ENCODE measurements at regions of chr18 and their contacts with region 1.

Region 1: DNA sequence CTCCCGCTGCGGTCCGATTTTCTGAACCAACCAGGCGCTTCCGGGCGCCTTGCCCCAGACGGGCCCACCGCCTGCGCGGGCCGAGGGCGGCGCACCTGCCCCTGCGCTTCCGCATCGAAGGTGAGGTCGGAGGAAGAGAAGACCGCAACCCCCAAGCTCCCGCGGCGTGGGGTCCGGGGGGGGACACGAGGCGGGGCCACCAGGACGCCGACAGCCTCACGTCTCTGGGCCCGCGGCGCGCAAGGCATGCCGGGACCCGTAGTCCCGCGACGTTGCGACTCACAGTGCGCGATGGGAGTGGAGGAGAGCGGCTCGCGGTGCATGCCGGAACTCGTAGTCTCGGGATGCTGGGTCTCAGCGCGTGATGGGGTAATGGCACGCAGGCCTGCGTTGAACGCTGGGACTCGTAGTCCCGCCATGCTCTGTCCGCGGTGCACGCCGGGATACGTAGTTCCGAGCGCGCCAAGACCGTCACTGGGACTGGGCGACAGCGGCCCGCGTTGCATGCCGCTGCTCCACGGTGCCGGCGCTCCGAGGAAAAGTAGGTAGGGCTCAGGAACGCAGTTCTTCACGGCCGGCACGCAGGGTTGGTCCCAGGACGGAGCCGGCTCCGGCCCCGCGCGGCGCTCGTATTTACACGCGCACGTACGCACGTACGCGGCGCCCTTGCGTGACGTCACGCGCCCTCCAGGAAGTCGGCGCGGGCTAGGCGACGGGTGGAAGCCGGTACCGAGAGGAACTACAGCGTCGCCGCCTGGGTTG is at the start of gene CTDP1:
- DNase-seq: peak; percentile 94 to 99 (median 99)
- ATAC-seq: peak; percentile 91
- H3K4me3 ChIP-seq: peak within 1 kb of the TSS; percentile 94
- H3K4me3 Mint-ChIP-seq: peak within 1 kb of the TSS; percentile 85 to 99 (median 98)
- H3K27ac ChIP-seq: peak within 1 kb of the TSS; percentile 96
- H3K27ac Mint-ChIP-seq: peak within 1 kb of the TSS; percentile 92 to 100 (median 99)
- H3K4me1 ChIP-seq: peaks cover 34 to 55% of the 10 kb centered on the region in 2 donors
- H3K4me1 Mint-ChIP-seq: peaks cover 33 to 68% (median 63%) of the 10 kb centered on the region in 7 donors
- H3K27me3 ChIP-seq: no peaks in the 10 kb centered on the region
- H3K27me3 Mint-ChIP-seq: peaks cover 0 to 3% (median 0%) of the 10 kb centered on the region in 5 donors
- total RNA-seq, gene CTDP1: 38.8 to 75.3 (median 41.2) TPM

Region 2: DNA sequence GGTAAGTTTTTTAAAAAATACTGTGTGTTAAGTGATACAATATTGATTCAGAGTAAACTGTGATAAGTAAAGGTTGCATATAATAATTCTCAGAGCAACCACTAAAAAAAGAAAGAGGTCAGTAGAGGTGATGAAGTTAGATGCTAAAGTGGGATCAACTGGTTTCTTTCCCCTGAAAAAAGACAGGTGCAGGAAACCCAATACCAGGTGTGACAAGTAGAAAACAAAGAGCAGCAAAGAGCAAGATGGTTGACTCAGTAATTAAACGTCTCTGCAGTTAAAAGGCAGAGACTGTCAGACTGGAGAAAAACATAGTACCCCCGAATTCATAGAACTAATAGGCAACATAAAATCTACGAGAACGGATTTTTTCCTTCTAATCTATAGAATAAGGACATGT is 481.8 kb before region 1 on chr18:
- CTCF ChIA-PET with region 1: no interaction called
- POLR2A ChIA-PET with region 1: no interaction called
- intact Hi-C with region 1: no loop called
- DNase-seq: no peak
- ATAC-seq: no peak
- H3K4me3 ChIP-seq: no peak overlapping the region
- H3K4me3 Mint-ChIP-seq: no peak overlapping the region
- H3K27ac ChIP-seq: no peak overlapping the region
- H3K27ac Mint-ChIP-seq: no peak overlapping the region
- H3K4me1 ChIP-seq: no peaks in the 10 kb centered on the region
- H3K4me1 Mint-ChIP-seq: peaks cover 3 to 16% (median 6%) of the 10 kb centered on the region in 7 donors
- H3K27me3 ChIP-seq: no peaks in the 10 kb centered on the region
- H3K27me3 Mint-ChIP-seq: no peaks in the 10 kb centered on the region

Region 3: DNA sequence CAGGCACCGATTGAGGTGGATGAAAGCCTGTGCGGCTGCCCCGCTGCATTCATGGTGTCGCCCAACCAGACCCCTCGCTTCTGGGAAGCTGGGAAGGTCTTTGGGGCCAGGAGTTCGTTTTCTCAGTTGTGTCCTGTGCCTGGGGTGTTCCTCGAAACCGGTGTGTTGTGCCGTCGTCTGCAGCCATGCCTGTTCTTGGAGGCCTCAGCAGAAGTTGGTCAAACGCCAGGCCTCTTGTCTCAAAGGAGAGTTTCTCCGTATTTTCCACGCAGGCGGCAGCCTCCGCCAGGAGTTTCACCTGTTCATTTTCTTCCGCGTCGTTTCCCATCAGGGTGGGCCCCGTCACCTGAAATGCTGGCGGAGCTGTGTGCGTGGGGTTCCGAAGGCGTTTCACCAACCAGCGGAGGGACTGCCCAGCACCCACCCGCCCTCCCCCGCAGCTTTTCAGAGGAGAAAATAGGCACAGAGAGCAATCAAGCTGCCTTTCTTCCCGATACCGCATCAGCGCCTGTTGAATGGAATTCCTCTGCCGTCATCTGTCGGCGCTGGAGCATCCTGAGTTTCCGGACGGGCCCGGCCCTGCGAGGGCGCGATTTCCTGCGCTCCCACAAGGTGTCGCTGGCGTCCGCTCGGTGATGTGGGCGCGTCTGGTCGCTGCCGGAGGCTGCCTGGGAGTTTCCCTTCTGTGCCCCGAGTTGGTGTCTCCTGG is 300.6 kb before region 1 on chr18:
- CTCF ChIA-PET with region 1: no interaction called
- POLR2A ChIA-PET with region 1: no interaction called
- intact Hi-C with region 1: no loop called
- DNase-seq: peak; percentile 67 to 87 (median 78)
- ATAC-seq: peak; percentile 95
- H3K4me3 ChIP-seq: no peak overlapping the region
- H3K4me3 Mint-ChIP-seq: peak overlapping the region in 2 of 10 donors; percentile 11 to 50
- H3K27ac ChIP-seq: no peak overlapping the region
- H3K27ac Mint-ChIP-seq: peak overlapping the region in 7 of 9 donors; percentile 18 to 77 (median 63)
- H3K4me1 ChIP-seq: peaks cover 6 to 7% of the 10 kb centered on the region in 2 donors
- H3K4me1 Mint-ChIP-seq: peaks cover 4 to 9% (median 9%) of the 10 kb centered on the region in 7 donors
- H3K27me3 ChIP-seq: no peaks in the 10 kb centered on the region
- H3K27me3 Mint-ChIP-seq: no peaks in the 10 kb centered on the region

Region 4: GRCh38 chr18:79400091-79400590 is 279.2 kb before region 1 on chr18:
- CTCF ChIA-PET with region 1: no interaction called
- POLR2A ChIA-PET with region 1: interaction called, 6 read pairs
- intact Hi-C with region 1: loop called (anchors 1 kb)
- DNase-seq: peak in 8 of 9 donors; percentile 38 to 65 (median 52)
- ATAC-seq: peak; percentile 45
- H3K4me3 ChIP-seq: peak overlapping the region; percentile 52
- H3K4me3 Mint-ChIP-seq: peak overlapping the region in 2 of 10 donors; percentile 90 to 91
- H3K27ac ChIP-seq: peak overlapping the region; percentile 95
- H3K27ac Mint-ChIP-seq: no peak overlapping the region
- H3K4me1 ChIP-seq: peaks cover 22 to 43% of the 10 kb centered on the region in 2 donors
- H3K4me1 Mint-ChIP-seq: peaks cover 31 to 64% (median 52%) of the 10 kb centered on the region in 7 donors
- H3K27me3 ChIP-seq: no peaks in the 10 kb centered on the region
- H3K27me3 Mint-ChIP-seq: no peaks in the 10 kb centered on the region

Region 5: DNA sequence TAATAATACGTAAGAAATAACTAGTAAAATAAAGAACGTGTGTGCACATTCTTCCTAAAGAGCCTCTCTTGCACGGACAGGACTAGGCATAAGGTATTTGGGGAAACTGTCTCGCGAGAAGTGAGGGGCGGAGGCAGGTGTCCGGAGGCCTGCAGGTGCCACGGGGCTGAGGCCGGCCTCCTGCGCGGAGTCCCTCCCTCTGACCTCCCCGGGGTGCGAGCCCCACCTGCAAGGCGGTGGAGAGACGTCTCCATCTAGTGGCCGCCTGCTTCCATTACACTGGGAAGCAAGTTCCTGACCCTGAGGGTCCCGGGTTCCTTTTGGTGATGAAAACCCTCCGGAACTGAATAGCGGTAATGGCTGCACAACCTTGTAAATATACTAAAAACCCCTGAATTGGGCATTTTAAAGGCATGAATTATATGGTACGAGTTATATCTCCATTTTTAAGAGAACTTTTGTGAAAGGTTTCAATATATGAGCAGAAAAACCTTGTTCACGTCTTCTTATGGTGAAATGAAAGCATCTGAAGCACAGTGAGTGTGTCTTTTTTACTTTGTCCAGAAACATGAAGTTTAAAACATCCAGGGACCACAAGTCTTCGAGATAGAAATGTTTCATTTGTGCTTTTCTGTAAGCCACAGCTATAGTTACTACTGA is 35.2 kb before region 1 on chr18:
- CTCF ChIA-PET with region 1: no interaction called
- POLR2A ChIA-PET with region 1: no interaction called
- intact Hi-C with region 1: loop called in 1 of 2 experiments (anchors 1 kb)
- DNase-seq: peak; percentile 34 to 74 (median 55)
- ATAC-seq: peak; percentile 87
- H3K4me3 ChIP-seq: no peak overlapping the region
- H3K4me3 Mint-ChIP-seq: no peak overlapping the region
- H3K27ac ChIP-seq: no peak overlapping the region
- H3K27ac Mint-ChIP-seq: no peak overlapping the region
- H3K4me1 ChIP-seq: peaks cover 4 to 5% of the 10 kb centered on the region in 2 donors
- H3K4me1 Mint-ChIP-seq: peaks cover 0 to 3% (median 0%) of the 10 kb centered on the region in 7 donors
- H3K27me3 ChIP-seq: no peaks in the 10 kb centered on the region
- H3K27me3 Mint-ChIP-seq: peaks cover 4 to 13% (median 6%) of the 10 kb centered on the region in 5 donors

Region 6: GRCh38 chr18:79924814-79925731 is 245.8 kb after region 1 on chr18:
- CTCF ChIA-PET with region 1: no interaction called
- POLR2A ChIA-PET with region 1: no interaction called
- intact Hi-C with region 1: no loop called
- DNase-seq: peak in 1 of 9 donors; percentile 14
- ATAC-seq: peak; percentile 10
- H3K4me3 ChIP-seq: no peak overlapping the region
- H3K4me3 Mint-ChIP-seq: no peak overlapping the region
- H3K27ac ChIP-seq: no peak overlapping the region
- H3K27ac Mint-ChIP-seq: peak overlapping the region in 1 of 9 donors; percentile 64
- H3K4me1 ChIP-seq: no peaks in the 10 kb centered on the region
- H3K4me1 Mint-ChIP-seq: peaks cover 0 to 17% (median 8%) of the 10 kb centered on the region in 7 donors
- H3K27me3 ChIP-seq: no peaks in the 10 kb centered on the region
- H3K27me3 Mint-ChIP-seq: no peaks in the 10 kb centered on the region

Region 7: DNA sequence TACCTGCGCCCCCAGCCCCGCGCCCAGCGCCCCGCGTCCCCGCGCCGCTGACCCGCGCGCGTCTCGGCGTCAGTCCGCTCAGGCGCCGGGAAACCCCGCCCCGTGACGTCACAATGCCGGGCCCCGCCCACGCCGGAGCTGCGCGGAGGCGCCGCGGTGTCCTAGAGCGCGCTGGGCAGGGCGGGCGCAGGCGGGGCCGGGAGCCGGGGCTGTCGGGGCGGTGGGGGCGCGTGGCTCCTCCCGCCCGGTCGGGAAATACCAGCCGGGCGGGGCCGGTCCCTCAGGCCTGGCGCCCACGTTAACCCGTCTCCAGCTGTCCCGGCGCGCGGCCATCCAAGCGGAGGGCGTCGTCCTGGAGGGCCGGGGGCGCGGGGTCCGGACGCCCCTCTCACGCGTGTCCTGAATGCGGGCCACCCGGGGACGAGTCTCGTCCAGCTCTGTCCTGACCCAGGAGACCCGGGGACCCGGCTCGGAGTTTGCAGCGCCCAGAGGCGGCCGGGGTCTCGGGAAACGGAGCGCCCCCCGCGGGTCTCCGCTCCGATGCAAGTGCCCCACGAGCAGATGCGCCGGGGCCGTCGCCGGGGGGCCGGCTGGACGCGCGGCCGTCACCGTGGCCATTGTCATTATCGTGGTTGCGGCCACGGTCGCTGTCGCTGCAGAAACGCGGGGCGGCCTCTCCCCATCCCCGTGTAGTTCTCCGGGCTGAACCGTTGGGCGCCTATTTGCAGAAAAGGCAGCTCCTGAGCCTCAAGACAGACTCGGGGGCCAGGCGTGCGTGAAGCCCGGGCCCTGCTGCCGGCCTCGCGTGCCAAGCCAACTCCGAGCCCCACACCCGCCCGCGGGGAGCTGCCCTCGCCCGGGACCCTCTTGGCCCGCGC is 272.5 kb after region 1 on chr18 and contains the start of gene SLC66A2:
- CTCF ChIA-PET with region 1: no interaction called
- POLR2A ChIA-PET with region 1: interaction called, 4 read pairs
- intact Hi-C with region 1: loop called (anchors 1 kb)
- DNase-seq: peak; percentile 80 to 98 (median 90)
- ATAC-seq: peak; percentile 94
- H3K4me3 ChIP-seq: peak within 1 kb of the TSS; percentile 65
- H3K4me3 Mint-ChIP-seq: peak within 1 kb of the TSS; percentile 78 to 93 (median 87)
- H3K27ac ChIP-seq: peak within 1 kb of the TSS; percentile 88
- H3K27ac Mint-ChIP-seq: peak within 1 kb of the TSS; percentile 55 to 90 (median 80)
- H3K4me1 ChIP-seq: peaks cover 7 to 25% of the 10 kb centered on the region in 2 donors
- H3K4me1 Mint-ChIP-seq: peaks cover 16 to 37% (median 32%) of the 10 kb centered on the region in 7 donors
- H3K27me3 ChIP-seq: no peaks in the 10 kb centered on the region
- H3K27me3 Mint-ChIP-seq: no peaks in the 10 kb centered on the region
- total RNA-seq, gene SLC66A2: 30.7 to 106 (median 40.4) TPM

Region 8: GRCh38 chr18:79988451-79989194 is 309.3 kb after region 1 on chr18 and contains the start of gene TXNL4A:
- CTCF ChIA-PET with region 1: no interaction called
- POLR2A ChIA-PET with region 1: interaction called, 3 read pairs
- intact Hi-C with region 1: loop called (anchors 1 kb)
- DNase-seq: peak; percentile 76 to 88 (median 84)
- ATAC-seq: peak; percentile 97
- H3K4me3 ChIP-seq: peak within 1 kb of the TSS; percentile 94
- H3K4me3 Mint-ChIP-seq: peak within 1 kb of the TSS; percentile 80 to 97 (median 92)
- H3K27ac ChIP-seq: peak within 1 kb of the TSS; percentile 93
- H3K27ac Mint-ChIP-seq: peak within 1 kb of the TSS; percentile 85 to 98 (median 95)
- H3K4me1 ChIP-seq: peaks cover 20 to 27% of the 10 kb centered on the region in 2 donors
- H3K4me1 Mint-ChIP-seq: peaks cover 30 to 45% (median 38%) of the 10 kb centered on the region in 7 donors
- H3K27me3 ChIP-seq: no peaks in the 10 kb centered on the region
- H3K27me3 Mint-ChIP-seq: peaks cover 0 to 5% (median 0%) of the 10 kb centered on the region in 5 donors
- total RNA-seq, gene TXNL4A: 56.9 to 107 (median 69.7) TPM

Region 9: GRCh38 chr18:80108728-80109675 is 429.7 kb after region 1 on chr18 and contains the start of gene ADNP2:
- CTCF ChIA-PET with region 1: no interaction called
- POLR2A ChIA-PET with region 1: interaction called, 3 read pairs
- intact Hi-C with region 1: loop called (anchors 1 kb)
- DNase-seq: peak; percentile 72 to 93 (median 89)
- ATAC-seq: peak; percentile 89
- H3K4me3 ChIP-seq: peak within 1 kb of the TSS; percentile 69
- H3K4me3 Mint-ChIP-seq: peak within 1 kb of the TSS; percentile 72 to 90 (median 86)
- H3K27ac ChIP-seq: peak within 1 kb of the TSS; percentile 85
- H3K27ac Mint-ChIP-seq: peak within 1 kb of the TSS; percentile 59 to 97 (median 93)
- H3K4me1 ChIP-seq: peaks cover 14 to 19% of the 10 kb centered on the region in 2 donors
- H3K4me1 Mint-ChIP-seq: peaks cover 23 to 58% (median 44%) of the 10 kb centered on the region in 7 donors
- H3K27me3 ChIP-seq: no peaks in the 10 kb centered on the region
- H3K27me3 Mint-ChIP-seq: peaks cover 0 to 3% (median 0%) of the 10 kb centered on the region in 5 donors
- total RNA-seq, gene ADNP2: 18.4 to 41.4 (median 25.3) TPM